Endothelial cell of umbilical vein (primary cell): ENCODE measurements at regions of chr3 and their contacts with region 1.

Region 1: DNA sequence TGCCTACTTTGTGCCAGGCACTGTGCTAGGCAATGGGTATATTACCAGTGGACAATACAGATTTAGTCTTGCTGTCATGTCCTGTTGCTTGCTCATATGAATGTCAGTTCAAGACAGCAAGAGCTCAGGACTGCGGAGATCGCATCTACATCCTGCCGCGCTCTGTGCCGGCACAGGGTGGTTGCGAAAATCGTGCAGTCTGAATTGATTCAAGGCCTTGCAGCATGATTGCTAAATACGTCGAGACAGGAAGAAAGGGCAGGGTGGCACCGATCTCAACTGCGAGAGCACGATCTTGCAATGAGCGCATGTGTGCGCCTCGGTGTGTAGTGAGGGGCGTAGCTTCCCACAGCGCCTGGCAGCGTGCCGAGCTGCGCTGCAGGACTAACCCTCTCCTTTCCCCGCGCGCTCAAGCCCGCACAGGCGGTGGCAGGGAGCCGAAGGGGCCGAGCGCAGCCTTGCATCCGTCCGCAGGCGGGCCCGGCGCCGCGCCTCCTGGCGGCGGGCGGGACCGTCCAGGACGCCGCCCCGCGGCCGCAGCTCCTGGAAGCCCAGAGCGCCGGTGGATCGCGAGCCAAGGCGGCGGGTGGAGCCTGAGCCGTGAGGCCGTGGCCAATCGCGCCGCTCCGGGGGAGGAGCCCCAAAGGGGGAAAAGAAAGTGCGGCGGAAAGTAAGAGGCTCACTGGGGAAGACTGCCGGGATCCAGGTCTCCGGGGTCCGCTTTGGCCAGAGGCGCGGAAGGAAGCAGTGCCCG is at the start of gene IL1RAP:
- DNase-seq: peak; percentile 91
- H3K4me3 ChIP-seq: peak within 1 kb of the TSS; percentile 67 to 93 (median 87)
- H3K27ac ChIP-seq: peak within 1 kb of the TSS; percentile 45
- H3K4me1 ChIP-seq: peaks cover 6% of the 10 kb centered on the region
- H3K27me3 ChIP-seq: no peaks in the 10 kb centered on the region
- CTCF ChIP-seq: peak; percentile 48 to 77
- POLR2A ChIP-seq: no peak
- total RNA-seq, gene IL1RAP: 8.7 and 9.2 TPM in 2 replicates

Region 2: DNA sequence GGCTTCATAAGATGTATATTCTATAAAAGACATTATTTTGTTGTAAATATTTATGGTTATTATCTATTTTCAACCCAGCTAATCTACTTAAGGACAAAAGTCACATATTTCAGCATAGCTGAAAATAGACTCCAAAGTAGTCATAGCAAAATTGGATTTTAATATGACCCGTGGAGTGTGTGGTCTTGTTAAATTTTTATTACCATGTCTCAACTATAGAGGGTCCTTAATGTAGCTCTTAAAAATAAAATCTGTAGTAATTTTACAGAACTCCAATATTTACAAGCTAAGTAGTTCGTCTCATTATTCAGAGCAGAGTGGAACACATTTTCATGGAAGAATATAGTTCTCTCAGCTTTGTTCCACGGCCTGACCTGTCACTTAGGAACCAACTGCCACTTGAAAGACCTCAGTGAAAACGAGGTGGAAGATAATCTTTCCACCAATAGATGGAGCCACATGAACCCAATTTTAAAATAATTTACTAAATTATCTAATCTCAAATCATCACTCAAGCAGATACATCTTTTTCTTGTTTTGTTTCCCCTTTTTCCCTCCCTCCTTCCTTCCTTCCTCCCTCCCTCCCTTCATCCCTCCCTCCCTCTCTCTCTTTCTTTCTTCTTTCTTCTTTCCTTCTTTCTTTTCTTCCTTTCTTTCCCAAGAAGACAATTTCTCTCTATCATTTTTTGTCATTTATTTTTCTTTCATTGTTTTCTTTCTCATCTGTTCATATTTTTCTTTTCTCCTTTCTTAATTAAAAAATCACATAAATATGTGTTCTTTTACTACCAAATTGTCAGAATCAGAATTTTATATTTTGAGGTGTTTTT is 288.5 kb before region 1 on chr3:
- CTCF ChIA-PET with region 1: interaction called, 3 read pairs
- POLR2A ChIA-PET with region 1: no interaction called
- dilution Hi-C with region 1: no loop called
- intact Hi-C with region 1: loop called (anchors 5 kb)
- DNase-seq: peak; percentile 58
- H3K4me3 ChIP-seq: no peak overlapping the region
- H3K27ac ChIP-seq: no peak overlapping the region
- H3K4me1 ChIP-seq: peaks cover 10% of the 10 kb centered on the region
- H3K27me3 ChIP-seq: no peaks in the 10 kb centered on the region
- CTCF ChIP-seq: peak; percentile 20 to 24
- POLR2A ChIP-seq: no peak

Region 3: DNA sequence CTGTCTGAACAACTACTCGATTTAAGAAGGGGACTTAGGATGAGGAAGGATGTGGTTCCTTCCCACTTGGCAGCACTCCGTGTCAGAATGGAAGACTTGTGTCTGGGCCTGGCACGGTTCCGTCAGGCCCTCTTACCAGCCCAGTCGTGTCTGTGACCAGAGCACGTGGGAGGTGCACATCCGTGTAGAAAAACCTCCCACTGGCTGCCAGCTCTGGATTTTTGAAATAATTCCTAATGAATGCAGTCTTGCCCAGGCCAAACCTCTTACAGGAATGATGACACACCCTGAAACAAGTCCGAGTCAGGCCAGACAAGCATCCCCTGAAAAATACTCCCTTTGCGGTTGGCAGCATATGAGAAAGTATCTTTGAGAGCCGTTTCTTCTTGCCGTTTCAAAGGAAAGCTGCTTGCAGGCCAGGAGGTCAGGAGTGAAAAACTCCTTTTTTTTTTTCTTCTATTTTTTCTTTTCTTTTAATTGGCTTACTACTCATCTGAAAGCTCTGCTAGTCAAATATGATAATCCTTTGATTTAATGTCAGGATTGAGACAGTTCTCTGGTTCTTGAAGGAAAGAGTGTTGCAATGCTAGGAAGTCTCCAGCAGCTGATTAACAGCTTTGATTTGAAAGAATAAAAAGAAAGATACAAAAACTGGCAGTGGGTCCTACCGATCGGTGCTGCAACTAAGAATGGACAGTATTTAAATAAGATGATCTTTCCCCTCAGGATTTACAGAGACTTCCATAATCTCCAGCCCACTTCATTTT is 20.1 kb after region 1 on chr3:
- CTCF ChIA-PET with region 1: interaction called, 28 read pairs
- POLR2A ChIA-PET with region 1: no interaction called
- dilution Hi-C with region 1: no loop called
- intact Hi-C with region 1: loop called (anchors 2 kb)
- DNase-seq: peak; percentile 56
- H3K4me3 ChIP-seq: no peak overlapping the region
- H3K27ac ChIP-seq: no peak overlapping the region
- H3K4me1 ChIP-seq: peaks cover 11% of the 10 kb centered on the region
- H3K27me3 ChIP-seq: no peaks in the 10 kb centered on the region
- CTCF ChIP-seq: no peak
- POLR2A ChIP-seq: no peak

Region 4: DNA sequence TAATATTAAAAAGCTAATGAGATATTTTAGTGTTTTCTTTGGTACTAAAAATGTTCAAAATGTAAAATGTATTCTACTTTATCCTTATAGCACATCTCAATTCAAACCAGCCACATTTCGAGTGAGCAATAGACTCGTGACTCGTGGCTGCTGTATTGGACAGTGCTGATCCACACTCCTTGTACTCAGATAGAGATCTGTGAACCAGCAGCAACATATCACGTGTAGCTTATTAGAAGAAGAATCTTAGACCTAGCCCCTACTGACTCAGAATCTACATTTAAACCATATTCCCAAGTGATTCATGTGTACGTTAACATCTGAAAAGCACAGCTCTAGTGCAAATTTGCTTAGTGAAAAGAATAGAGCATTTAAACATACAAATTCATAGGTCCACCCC is 131.2 kb after region 1 on chr3:
- CTCF ChIA-PET with region 1: no interaction called
- POLR2A ChIA-PET with region 1: no interaction called
- dilution Hi-C with region 1: no loop called
- intact Hi-C with region 1: loop called (anchors 5 kb)
- DNase-seq: no peak
- H3K4me3 ChIP-seq: no peak overlapping the region
- H3K27ac ChIP-seq: no peak overlapping the region
- H3K4me1 ChIP-seq: no peaks in the 10 kb centered on the region
- H3K27me3 ChIP-seq: no peaks in the 10 kb centered on the region
- CTCF ChIP-seq: no peak
- POLR2A ChIP-seq: no peak

Region 5: DNA sequence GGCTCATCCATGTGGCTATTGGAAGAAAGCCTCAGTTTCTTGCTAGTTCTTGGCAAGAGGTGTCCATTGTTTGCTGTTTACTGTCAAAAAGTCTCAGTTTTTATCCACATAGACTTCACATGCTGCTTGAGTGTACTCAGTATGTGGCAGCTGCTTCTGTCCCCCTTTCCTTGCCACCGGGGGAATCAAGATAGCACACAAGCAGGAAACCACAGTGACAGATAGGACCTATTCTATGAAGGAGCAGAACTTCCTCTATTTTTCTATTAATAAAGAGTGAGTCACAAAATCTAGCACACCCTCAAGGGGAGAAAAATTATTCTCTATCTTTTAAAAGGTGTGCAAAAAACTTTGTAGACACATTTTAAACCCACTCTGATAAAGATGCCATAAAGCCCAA is 470.3 kb after region 1 on chr3:
- CTCF ChIA-PET with region 1: no interaction called
- POLR2A ChIA-PET with region 1: no interaction called
- dilution Hi-C with region 1: no loop called
- intact Hi-C with region 1: no loop called
- DNase-seq: no peak
- H3K4me3 ChIP-seq: no peak overlapping the region
- H3K27ac ChIP-seq: no peak overlapping the region
- H3K4me1 ChIP-seq: no peaks in the 10 kb centered on the region
- H3K27me3 ChIP-seq: no peaks in the 10 kb centered on the region
- CTCF ChIP-seq: no peak
- POLR2A ChIP-seq: no peak